PC-9 (cell line): ENCODE measurements at regions of chr20 and their contacts with region 1.

Region 1: DNA sequence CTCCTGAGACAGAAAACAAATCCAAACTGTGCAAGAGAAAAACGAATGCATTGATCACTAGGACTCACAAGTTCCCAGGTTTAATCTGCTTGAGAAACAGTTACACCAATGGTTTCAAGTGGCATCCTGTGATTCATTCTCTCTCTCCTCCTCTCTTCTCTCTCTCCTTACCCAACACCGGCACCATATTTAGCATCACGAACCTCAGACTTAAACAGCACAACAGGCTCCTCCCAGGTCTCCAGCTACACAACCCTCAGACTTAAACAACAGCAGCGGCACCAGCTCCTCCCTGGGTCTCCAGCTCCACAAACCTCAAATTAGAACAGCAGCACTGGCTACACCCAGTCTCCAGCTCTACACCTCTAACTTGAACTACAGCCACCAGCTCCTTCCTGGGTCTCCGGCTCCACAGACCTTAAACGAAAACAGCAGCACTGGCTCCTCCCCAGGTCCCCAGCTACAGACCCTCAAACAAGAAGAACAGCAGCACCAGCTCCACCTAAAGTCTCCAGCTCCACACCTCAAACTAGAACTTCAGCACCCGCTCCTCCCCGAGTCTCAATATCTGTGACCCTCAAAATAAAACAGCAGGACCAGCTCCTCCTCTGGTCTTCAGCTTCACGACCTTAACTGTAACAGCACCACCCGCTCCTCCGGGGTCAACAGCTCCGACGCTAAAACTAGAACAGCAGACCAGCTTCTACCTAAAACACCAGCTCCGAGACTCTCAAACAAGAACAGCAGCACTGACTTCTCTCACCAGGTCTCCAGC is 355.9 kb downstream of the PREX1 start:
- DNase-seq: no peak
- H3K4me3 ChIP-seq: no peak overlapping the region
- H3K27ac ChIP-seq: no peak overlapping the region
- H3K4me1 ChIP-seq: no peaks in the 10 kb centered on the region
- H3K27me3 ChIP-seq: peaks cover 65% of the 10 kb centered on the region
- CTCF ChIP-seq: no peak

Region 2: GRCh38 chr20:47672166-47672565 is 799.8 kb before region 1 on chr20:
- CTCF ChIA-PET with region 1: no interaction called
- POLR2A ChIA-PET with region 1: interaction called, 12 read pairs
- intact Hi-C with region 1: no loop called
- DNase-seq: no peak
- H3K4me3 ChIP-seq: no peak overlapping the region
- H3K27ac ChIP-seq: no peak overlapping the region
- H3K4me1 ChIP-seq: no peaks in the 10 kb centered on the region
- H3K27me3 ChIP-seq: no peaks in the 10 kb centered on the region
- CTCF ChIP-seq: no peak

Region 3: DNA sequence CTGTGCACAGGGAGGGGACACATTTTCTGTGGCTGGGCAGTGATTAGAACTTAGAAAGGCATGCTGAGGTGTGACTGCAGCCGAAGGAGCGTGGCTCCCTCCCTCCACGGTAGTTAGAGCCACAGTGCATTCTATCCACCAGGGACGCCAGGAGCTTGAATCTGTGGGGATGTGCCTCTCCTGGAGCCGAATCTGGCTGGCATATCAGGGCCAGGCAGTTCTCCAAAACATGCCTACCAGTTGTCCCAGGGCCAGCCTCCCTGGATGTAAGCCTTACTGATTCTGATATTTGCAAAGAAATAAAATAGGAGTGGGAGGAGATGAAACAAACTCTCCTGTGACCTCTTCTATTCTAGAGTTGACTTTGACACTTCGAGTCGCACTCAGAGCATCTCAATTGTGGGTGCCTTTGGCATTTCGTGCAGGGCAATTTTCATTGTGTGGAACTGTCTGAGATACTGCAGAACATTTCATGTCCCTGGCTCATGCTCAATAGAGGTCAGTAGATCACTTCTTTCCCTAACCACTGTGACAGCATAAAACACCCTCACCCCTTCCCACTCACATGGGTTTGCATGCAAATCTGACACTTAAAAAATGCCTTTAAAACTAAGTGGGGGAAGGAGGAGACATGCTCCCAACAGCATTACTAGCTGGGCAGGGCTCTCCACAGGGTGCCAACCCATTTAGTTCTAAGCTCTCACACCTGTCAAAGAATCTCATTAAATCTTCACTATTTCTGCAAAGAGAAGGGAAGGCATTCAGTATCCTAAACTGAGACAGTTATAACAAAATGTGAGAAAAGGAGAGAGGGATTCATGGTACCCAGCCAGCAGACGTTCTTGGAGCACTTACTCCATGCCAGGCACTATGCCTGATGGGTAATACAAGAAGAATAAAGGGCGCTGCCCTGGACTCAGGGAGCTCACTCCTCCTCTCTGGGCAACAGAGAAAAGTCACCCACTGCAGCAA is 23.0 kb before region 1 on chr20:
- CTCF ChIA-PET with region 1: no interaction called
- POLR2A ChIA-PET with region 1: no interaction called
- intact Hi-C with region 1: no loop called
- DNase-seq: no peak
- H3K4me3 ChIP-seq: no peak overlapping the region
- H3K27ac ChIP-seq: no peak overlapping the region
- H3K4me1 ChIP-seq: no peaks in the 10 kb centered on the region
- H3K27me3 ChIP-seq: 0 out of 2 replicates have a peak, but pooled peaks cover 5% of the 10 kb centered on the region
- CTCF ChIP-seq: no peak